K562 (cell line): ENCODE measurements at regions of chr4 and their contacts with region 1.

Region 1: DNA sequence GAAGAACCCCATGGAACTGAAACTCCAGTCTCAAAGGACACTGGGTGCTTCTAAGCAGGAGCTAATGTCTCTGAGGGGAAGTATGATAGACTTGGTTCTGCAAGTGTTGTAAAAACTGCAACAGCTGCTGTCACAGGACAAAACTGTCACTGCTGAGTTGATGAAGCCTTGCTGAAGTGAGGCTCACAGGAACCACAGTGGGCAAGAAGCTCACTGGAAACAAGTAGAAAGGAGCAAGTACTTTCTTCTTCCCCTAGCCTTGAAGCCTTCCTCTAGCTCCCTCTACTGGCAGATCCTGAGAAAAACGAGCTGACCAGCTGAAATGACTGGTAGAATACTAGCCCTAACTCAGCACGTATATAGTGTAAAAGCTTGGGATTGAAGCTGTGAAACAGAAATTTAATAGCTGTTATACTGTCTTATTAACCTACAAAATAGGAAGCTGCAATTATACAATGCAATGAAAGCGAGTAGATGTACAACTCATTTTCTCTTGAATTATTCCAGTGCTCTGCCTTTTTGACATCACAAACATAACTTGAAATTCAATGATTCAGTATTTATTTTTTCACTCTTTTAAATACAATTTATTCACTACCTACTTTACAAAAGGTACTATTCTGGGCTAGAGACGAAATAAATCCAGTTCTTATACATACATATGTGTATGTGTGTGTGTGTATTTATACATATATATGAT is 91.4 kb downstream of the GABRB1 start:
- DNase-seq: peak; percentile 34 to 64 (median 39)
- ATAC-seq: peak; percentile 66
- H3K4me3 ChIP-seq: no peak overlapping the region
- H3K27ac ChIP-seq: no peak overlapping the region
- H3K4me1 ChIP-seq: no peaks in the 10 kb centered on the region
- H3K27me3 ChIP-seq: no peaks in the 10 kb centered on the region
- CTCF ChIP-seq: peak; percentile 33 to 73 (median 57); a peak in 5 of 6 replicates
- EP300 ChIP-seq: no peak
- POLR2A ChIP-seq: no peak
- RAD21 ChIP-seq: peak in 1 of 2 experiments; percentile 44; a peak in 1 of 4 replicates

Region 2: DNA sequence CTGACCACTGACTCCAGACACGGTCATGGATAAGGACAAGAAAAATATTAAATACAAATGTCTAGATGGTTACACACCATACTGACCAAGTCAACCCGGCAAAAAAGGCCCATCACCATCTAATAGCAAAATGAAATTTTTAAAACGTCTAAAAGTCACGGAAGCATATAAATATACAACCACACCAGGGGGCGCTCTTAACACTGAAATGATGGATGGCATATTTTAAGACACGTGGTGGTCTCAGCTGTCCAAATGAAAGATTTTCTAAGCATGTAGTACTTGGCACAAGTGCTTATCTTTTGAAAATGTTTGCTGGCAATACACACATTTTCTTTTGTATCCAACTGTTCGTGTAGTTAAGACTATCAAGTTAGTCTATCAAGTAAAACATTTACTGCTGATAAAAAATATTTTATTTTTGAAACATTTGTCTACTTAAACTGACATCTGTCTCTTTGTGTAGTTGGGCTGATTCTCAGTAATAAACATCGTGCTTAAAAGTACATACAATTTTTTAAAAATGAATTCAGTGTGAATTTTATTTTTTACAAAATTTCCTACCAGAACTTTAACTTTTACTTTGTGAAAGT is 278.3 kb before region 1 on chr4:
- CTCF ChIA-PET with region 1: no interaction called
- POLR2A ChIA-PET with region 1: no interaction called
- in situ Hi-C with region 1: no loop called
- intact Hi-C with region 1: loop called (anchors 1 kb)
- DNase-seq: peak; percentile 21 to 68 (median 24)
- ATAC-seq: 0 out of 3 replicates have a peak, but pooled peaks have one; percentile 43
- H3K4me3 ChIP-seq: no peak overlapping the region
- H3K27ac ChIP-seq: no peak overlapping the region
- H3K4me1 ChIP-seq: no peaks in the 10 kb centered on the region
- H3K27me3 ChIP-seq: no peaks in the 10 kb centered on the region
- CTCF ChIP-seq: peak; percentile 37 to 61 (median 57); a peak in 5 of 6 replicates
- EP300 ChIP-seq: no peak
- POLR2A ChIP-seq: no peak
- RAD21 ChIP-seq: peak; percentile 51 to 72